IMR-90 (cell line): ENCODE measurements at regions of chr5 and their contacts with region 1.

Region 1: GRCh38 chr5:74640450-74640953 is at the start of gene ENC1:
- DNase-seq: peak; percentile 84
- ATAC-seq: peak; percentile 77
- H3K4me3 ChIP-seq: peak within 1 kb of the TSS; percentile 95
- H3K27ac ChIP-seq: peak within 1 kb of the TSS; percentile 82
- H3K4me1 ChIP-seq: peaks cover 16% of the 10 kb centered on the region
- H3K27me3 ChIP-seq: no peaks in the 10 kb centered on the region
- CTCF ChIP-seq: peak; percentile 53
- POLR2A ChIP-seq: peak; percentile 75
- RAD21 ChIP-seq: peak; percentile 43; the same call in 1 of the 2 replicates
- total RNA-seq, gene ENC1: 55.8 and 70.8 TPM in 2 replicates

Region 2: DNA sequence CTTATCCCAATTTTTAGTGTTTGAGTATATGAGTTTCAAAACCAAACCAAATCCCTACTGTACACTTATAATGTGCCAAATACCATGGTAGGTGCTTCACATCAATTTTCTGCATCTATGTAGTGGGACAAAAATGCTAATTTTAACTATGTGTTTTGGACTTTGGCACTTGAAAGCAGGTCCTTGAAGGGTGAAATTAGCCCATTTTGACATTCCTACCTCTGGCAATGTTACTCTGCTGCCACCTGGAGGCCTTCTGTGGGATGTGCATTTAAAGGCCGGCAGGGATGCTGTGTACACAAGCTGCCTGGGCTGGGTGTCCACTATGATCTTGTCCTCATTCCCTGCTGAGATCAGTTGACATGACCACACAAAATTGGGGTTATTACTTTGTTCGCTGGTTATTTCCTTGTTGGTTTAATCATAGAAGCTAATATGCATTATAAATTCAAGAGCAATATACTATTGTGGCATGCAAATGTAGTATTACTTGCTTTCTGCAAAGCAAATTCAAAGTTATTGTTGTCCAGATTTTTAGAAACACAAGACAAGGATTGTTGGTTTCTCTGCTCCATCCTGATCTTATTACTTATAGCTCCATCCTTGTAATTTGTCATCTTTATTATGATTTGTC is 847.7 kb before region 1 on chr5:
- CTCF ChIA-PET with region 1: interaction called, 5 read pairs
- POLR2A ChIA-PET with region 1: no interaction called
- dilution Hi-C with region 1: no loop called
- in situ Hi-C with region 1: loop called (anchors 10 kb)
- intact Hi-C with region 1: loop called (anchors 5 kb)
- DNase-seq: peak; percentile 76
- ATAC-seq: peak; percentile 71
- H3K4me3 ChIP-seq: no peak overlapping the region
- H3K27ac ChIP-seq: no peak overlapping the region
- H3K4me1 ChIP-seq: peaks cover 19% of the 10 kb centered on the region
- H3K27me3 ChIP-seq: no peaks in the 10 kb centered on the region
- CTCF ChIP-seq: peak; percentile 96
- POLR2A ChIP-seq: no peak
- RAD21 ChIP-seq: peak; percentile 97

Region 3: DNA sequence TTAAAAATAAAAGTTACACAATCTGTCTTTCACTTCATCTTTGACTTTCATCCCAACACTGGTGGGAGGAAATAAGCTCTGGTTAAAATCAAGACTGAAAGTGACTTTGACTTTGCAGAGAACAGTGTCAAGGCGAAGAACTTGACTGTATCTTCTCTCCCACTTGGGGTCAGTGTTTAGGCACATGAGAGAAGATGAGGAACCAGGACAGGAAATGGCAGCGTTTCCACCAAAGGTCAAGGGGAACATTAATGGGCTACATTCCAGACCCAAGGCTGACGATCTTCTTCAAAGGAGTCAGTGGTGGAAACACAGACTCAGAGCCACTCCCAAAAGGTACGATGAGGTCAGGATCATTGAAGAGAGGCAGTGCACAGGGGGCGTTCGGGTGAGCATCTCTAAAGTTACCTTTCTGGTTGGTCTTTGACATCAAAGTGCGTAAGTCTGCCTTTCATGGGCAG is 605.0 kb before region 1 on chr5:
- CTCF ChIA-PET with region 1: interaction called, 6 read pairs
- POLR2A ChIA-PET with region 1: interaction called, 3 read pairs
- dilution Hi-C with region 1: no loop called
- in situ Hi-C with region 1: loop called (anchors 10 kb)
- intact Hi-C with region 1: loop called (anchors 1 kb)
- DNase-seq: peak; percentile 69
- ATAC-seq: peak; percentile 61
- H3K4me3 ChIP-seq: no peak overlapping the region
- H3K27ac ChIP-seq: no peak overlapping the region
- H3K4me1 ChIP-seq: no peaks in the 10 kb centered on the region; the same call in 1 of the 2 replicates
- H3K27me3 ChIP-seq: peaks cover 6% of the 10 kb centered on the region
- CTCF ChIP-seq: peak; percentile 48
- POLR2A ChIP-seq: no peak
- RAD21 ChIP-seq: peak; percentile 65

Region 4: DNA sequence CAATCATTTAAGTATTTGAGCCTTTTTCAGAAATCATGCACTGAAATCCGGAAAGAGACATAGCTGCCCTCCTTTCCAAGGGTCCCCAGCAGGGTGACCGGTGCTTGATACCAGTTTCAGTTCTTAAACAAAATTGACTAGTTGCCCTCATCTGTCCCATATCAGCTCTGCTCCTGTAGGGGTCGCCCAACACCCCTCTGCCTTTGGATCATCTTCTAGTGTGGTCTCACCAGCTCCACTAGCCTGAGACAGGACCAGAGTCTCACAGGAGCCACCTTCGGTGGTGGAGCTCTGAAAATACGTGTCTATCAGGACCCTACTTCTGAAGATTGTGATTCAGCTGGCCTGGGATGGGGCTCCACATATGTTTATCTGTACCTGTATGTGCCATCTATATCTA is 428.2 kb before region 1 on chr5:
- CTCF ChIA-PET with region 1: no interaction called
- POLR2A ChIA-PET with region 1: no interaction called
- dilution Hi-C with region 1: no loop called
- in situ Hi-C with region 1: no loop called
- intact Hi-C with region 1: loop called (anchors 5 kb)
- DNase-seq: peak; percentile 30
- ATAC-seq: peak; percentile 24; the same call in 1 of the 2 replicates
- H3K4me3 ChIP-seq: no peak overlapping the region
- H3K27ac ChIP-seq: no peak overlapping the region
- H3K4me1 ChIP-seq: no peaks in the 10 kb centered on the region
- H3K27me3 ChIP-seq: peaks cover 20% of the 10 kb centered on the region
- CTCF ChIP-seq: peak; percentile 53
- POLR2A ChIP-seq: no peak
- RAD21 ChIP-seq: peak; percentile 54

Region 5: GRCh38 chr5:74316064-74316679 is 324.3 kb before region 1 on chr5:
- CTCF ChIA-PET with region 1: no interaction called
- POLR2A ChIA-PET with region 1: no interaction called
- dilution Hi-C with region 1: no loop called
- in situ Hi-C with region 1: no loop called
- intact Hi-C with region 1: loop called (anchors 5 kb)
- DNase-seq: peak; percentile 98
- ATAC-seq: peak; percentile 96
- H3K4me3 ChIP-seq: no peak overlapping the region
- H3K27ac ChIP-seq: peak overlapping the region; percentile 69
- H3K4me1 ChIP-seq: peaks cover 7% of the 10 kb centered on the region
- H3K27me3 ChIP-seq: no peaks in the 10 kb centered on the region
- CTCF ChIP-seq: no peak
- POLR2A ChIP-seq: peak; percentile 71
- RAD21 ChIP-seq: 0 out of 2 replicates have a peak, but pooled peaks have one; percentile 22

Region 6: GRCh38 chr5:74352256-74352655 is 288.2 kb before region 1 on chr5:
- CTCF ChIA-PET with region 1: no interaction called
- POLR2A ChIA-PET with region 1: no interaction called
- dilution Hi-C with region 1: no loop called
- in situ Hi-C with region 1: no loop called
- intact Hi-C with region 1: no loop called
- DNase-seq: peak; percentile 41
- ATAC-seq: peak; percentile 49; the same call in 1 of the 2 replicates
- H3K4me3 ChIP-seq: no peak overlapping the region
- H3K27ac ChIP-seq: no peak overlapping the region
- H3K4me1 ChIP-seq: no peaks in the 10 kb centered on the region
- H3K27me3 ChIP-seq: peaks cover 8% of the 10 kb centered on the region
- CTCF ChIP-seq: no peak
- POLR2A ChIP-seq: no peak
- RAD21 ChIP-seq: no peak

Region 7: GRCh38 chr5:74490811-74491210 is 149.7 kb before region 1 on chr5:
- CTCF ChIA-PET with region 1: no interaction called
- POLR2A ChIA-PET with region 1: no interaction called
- dilution Hi-C with region 1: no loop called
- in situ Hi-C with region 1: no loop called
- intact Hi-C with region 1: loop called (anchors 10 kb)
- DNase-seq: no peak
- ATAC-seq: no peak
- H3K4me3 ChIP-seq: no peak overlapping the region
- H3K27ac ChIP-seq: no peak overlapping the region
- H3K4me1 ChIP-seq: no peaks in the 10 kb centered on the region
- H3K27me3 ChIP-seq: peaks cover 2% of the 10 kb centered on the region
- CTCF ChIP-seq: no peak
- POLR2A ChIP-seq: no peak
- RAD21 ChIP-seq: no peak